ENCODE measurements at regions of chr19 and their contacts with region 1.

Region 1: GRCh38 chr19:44570984-44571684 is 41.7 kb upstream of the CEACAM20 start:
- DNase-seq: peak; percentile 67 to 80
- H3K4me3 ChIP-seq: no peak overlapping the region
- H3K27ac ChIP-seq: no peak overlapping the region; the same call in 1 of the 2 replicates
- H3K4me1 ChIP-seq: peaks cover 67% of the 10 kb centered on the region
- H3K27me3 ChIP-seq: no peaks in the 10 kb centered on the region
- CTCF ChIP-seq: peak; percentile 92

Region 2: DNA sequence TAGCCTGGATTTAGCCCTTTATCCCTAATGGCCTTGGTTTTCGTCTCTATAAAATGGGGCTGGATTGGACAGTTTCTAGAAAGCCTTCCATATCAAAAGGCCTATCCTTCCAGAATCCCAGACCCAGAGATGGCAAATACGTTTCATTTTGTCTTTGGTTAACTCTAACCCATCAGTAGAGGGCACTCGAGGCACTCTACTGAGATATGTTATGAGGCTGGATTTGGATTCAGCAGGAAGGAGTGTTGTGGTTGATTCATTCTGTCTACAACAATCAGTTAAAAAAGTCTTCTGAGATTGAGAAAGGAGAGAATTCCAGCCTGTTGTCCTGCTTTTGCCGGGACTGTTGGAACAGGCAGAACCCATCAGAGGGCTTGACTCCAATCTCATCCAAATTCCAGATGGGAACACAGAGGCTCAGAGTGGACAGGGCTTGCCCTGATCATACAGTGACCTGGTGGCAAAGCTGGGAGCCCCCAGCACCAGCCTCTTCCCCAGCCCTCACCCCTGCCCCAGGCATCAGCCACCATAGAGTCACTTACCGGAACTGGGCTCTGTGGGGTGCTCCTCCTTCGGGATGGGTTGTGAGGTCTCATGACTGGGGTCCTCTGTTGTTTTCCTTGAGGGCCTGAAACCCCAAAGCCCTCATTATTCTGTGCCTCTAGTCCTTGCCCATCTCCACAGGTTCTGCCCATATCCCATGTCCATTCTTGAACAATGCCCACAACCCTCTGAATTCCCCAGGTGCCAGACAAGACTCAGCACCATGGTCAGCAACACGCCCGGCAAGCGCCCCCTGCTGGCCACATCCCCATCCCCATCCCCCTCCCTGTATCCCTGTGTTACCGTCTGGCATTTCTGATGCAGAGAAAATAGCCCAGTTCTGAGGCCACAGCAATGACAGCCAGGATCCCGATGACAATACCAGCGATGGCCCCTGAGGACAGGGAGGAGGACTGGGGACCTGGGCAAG is 58.5 kb before region 1 on chr19:
- CTCF ChIA-PET with region 1: no interaction called
- POLR2A ChIA-PET with region 1: no interaction called
- intact Hi-C with region 1: loop called (anchors 1 kb)
- DNase-seq: peak; percentile 50 to 73
- H3K4me3 ChIP-seq: no peak overlapping the region
- H3K27ac ChIP-seq: no peak overlapping the region
- H3K4me1 ChIP-seq: no peaks in the 10 kb centered on the region; the same call in 1 of the 2 replicates
- H3K27me3 ChIP-seq: peaks cover 10% of the 10 kb centered on the region; the same call in 1 of the 2 replicates
- CTCF ChIP-seq: peak; percentile 77

Region 3: GRCh38 chr19:44557933-44558332 is 13.2 kb before region 1 on chr19:
- CTCF ChIA-PET with region 1: no interaction called
- POLR2A ChIA-PET with region 1: no interaction called
- intact Hi-C with region 1: no loop called
- DNase-seq: peak in 1 of 2 experiments; percentile 91
- H3K4me3 ChIP-seq: no peak overlapping the region
- H3K27ac ChIP-seq: no peak overlapping the region
- H3K4me1 ChIP-seq: peaks cover 38% of the 10 kb centered on the region
- H3K27me3 ChIP-seq: no peaks in the 10 kb centered on the region
- CTCF ChIP-seq: no peak